ENCODE measurements at regions of chr11 and their contacts with region 1.

Region 1: DNA sequence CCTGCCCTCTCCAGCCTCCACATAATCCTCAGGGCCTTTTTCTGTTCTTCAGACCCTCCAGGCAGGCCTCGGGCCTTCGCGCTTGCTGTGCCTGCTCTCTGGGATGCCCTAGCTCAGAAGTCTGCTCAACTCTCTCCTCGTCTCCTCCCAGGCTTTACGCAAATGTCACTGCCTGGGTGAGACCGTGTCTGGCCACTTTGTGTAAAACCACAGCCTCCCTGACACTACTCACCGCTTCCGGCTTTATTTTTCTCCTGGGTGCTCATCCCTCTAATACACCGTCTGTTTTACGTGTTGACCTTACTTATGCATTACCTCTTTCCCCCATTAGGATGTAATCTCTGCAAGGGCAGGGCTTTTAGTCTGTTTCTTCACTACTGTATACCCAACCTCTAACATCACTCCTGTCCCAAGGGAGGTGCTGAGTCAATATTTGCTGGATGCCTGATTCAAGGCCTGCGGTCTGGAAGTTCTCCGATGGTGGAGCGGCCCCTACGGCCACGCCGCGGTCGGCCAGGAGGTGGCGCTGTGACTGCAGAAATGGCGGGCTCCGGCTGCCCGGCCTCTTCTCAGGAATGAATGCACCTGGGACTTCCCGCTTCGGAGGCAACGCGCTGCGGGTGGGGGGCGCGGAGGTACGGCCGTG is 58.2 kb upstream of the THY1 start:
- DNase-seq: peak; percentile 93
- ATAC-seq: peak; percentile 96
- H3K4me3 ChIP-seq: no peak overlapping the region
- H3K27ac ChIP-seq: no peak overlapping the region
- H3K4me1 ChIP-seq: no peaks in the 10 kb centered on the region
- H3K27me3 ChIP-seq: peaks cover 47% of the 10 kb centered on the region
- CTCF ChIP-seq: peak; percentile 98
- POLR2A ChIP-seq: no peak
- RAD21 ChIP-seq: peak; percentile 94

Region 2: GRCh38 chr11:119470317-119471291 is 10.5 kb before region 1 on chr11:
- CTCF ChIA-PET with region 1: no interaction called
- POLR2A ChIA-PET with region 1: no interaction called
- dilution Hi-C with region 1: no loop called
- in situ Hi-C with region 1: no loop called
- intact Hi-C with region 1: no loop called
- DNase-seq: peak; percentile 96
- ATAC-seq: peak; percentile 85
- H3K4me3 ChIP-seq: no peak overlapping the region
- H3K27ac ChIP-seq: peak overlapping the region; percentile 75
- H3K4me1 ChIP-seq: peaks cover 18% of the 10 kb centered on the region
- H3K27me3 ChIP-seq: no peaks in the 10 kb centered on the region
- CTCF ChIP-seq: no peak
- POLR2A ChIP-seq: no peak
- RAD21 ChIP-seq: peak; percentile 22; the same call in 1 of the 2 replicates

Region 3: GRCh38 chr11:119533921-119534736 is 53.0 kb after region 1 on chr11:
- CTCF ChIA-PET with region 1: no interaction called
- POLR2A ChIA-PET with region 1: no interaction called
- dilution Hi-C with region 1: no loop called
- in situ Hi-C with region 1: no loop called
- intact Hi-C with region 1: loop called (anchors 1 kb)
- DNase-seq: peak; percentile 23
- ATAC-seq: peak; percentile 92
- H3K4me3 ChIP-seq: no peak overlapping the region
- H3K27ac ChIP-seq: no peak overlapping the region
- H3K4me1 ChIP-seq: no peaks in the 10 kb centered on the region
- H3K27me3 ChIP-seq: peaks cover 65% of the 10 kb centered on the region
- CTCF ChIP-seq: peak; percentile 59
- POLR2A ChIP-seq: no peak
- RAD21 ChIP-seq: peak; percentile 54

Region 4: GRCh38 chr11:119666463-119667131 is 185.5 kb after region 1 on chr11:
- CTCF ChIA-PET with region 1: no interaction called
- POLR2A ChIA-PET with region 1: no interaction called
- dilution Hi-C with region 1: no loop called
- in situ Hi-C with region 1: no loop called
- intact Hi-C with region 1: loop called (anchors 1 kb)
- DNase-seq: peak; percentile 47
- ATAC-seq: peak; percentile 95
- H3K4me3 ChIP-seq: no peak overlapping the region
- H3K27ac ChIP-seq: no peak overlapping the region
- H3K4me1 ChIP-seq: peaks cover 4% of the 10 kb centered on the region; the same call in 1 of the 2 replicates
- H3K27me3 ChIP-seq: no peaks in the 10 kb centered on the region
- CTCF ChIP-seq: peak; percentile 94
- POLR2A ChIP-seq: peak; percentile 35; the same call in 1 of the 2 replicates
- RAD21 ChIP-seq: peak; percentile 98

Region 5: DNA sequence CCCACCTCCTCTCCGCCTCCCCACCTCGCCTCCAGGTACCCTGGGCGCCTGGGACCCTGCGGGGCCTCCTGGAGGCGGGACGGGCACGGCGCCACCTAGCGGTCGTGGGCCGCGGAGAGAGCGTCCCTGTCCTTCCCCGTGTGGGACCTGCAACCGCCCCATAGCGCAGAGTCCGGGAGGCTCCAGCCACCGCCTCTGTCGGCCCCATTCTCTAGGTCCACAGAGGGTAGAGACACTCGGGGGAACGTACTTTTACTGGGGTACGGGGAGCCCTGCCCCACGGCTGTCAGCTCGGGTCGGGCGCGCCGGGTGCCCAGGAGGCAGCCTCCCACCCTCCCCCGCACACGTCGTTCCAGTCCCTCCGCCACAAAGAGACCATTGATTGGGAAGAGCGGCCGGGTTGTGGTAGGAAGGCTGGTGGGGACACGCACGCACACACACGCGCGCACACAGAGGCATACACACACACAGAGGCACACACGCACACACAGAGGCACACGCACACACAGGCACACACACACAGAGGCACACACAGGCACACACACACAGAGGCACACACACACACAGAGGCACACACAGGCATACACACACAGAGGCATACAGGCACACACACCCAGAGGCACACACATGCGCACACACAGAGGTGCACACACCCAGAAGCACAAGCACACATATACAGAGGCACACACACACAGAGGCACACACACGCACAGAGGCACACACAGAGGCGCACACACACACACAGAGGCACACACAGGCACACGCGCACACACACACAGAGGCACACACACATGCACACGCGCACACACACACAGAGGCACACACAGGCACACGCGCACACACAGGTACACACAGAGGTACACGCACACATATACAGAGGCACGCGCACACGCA is 260.5 kb after region 1 on chr11:
- CTCF ChIA-PET with region 1: no interaction called
- POLR2A ChIA-PET with region 1: no interaction called
- dilution Hi-C with region 1: no loop called
- in situ Hi-C with region 1: no loop called
- intact Hi-C with region 1: loop called (anchors 1 kb)
- DNase-seq: no peak
- ATAC-seq: peak; percentile 80
- H3K4me3 ChIP-seq: no peak overlapping the region
- H3K27ac ChIP-seq: no peak overlapping the region
- H3K4me1 ChIP-seq: no peaks in the 10 kb centered on the region; the same call in 1 of the 2 replicates
- H3K27me3 ChIP-seq: peaks cover 67% of the 10 kb centered on the region
- CTCF ChIP-seq: peak; percentile 57
- POLR2A ChIP-seq: no peak
- RAD21 ChIP-seq: peak; percentile 33; the same call in 1 of the 2 replicates

Region 6: DNA sequence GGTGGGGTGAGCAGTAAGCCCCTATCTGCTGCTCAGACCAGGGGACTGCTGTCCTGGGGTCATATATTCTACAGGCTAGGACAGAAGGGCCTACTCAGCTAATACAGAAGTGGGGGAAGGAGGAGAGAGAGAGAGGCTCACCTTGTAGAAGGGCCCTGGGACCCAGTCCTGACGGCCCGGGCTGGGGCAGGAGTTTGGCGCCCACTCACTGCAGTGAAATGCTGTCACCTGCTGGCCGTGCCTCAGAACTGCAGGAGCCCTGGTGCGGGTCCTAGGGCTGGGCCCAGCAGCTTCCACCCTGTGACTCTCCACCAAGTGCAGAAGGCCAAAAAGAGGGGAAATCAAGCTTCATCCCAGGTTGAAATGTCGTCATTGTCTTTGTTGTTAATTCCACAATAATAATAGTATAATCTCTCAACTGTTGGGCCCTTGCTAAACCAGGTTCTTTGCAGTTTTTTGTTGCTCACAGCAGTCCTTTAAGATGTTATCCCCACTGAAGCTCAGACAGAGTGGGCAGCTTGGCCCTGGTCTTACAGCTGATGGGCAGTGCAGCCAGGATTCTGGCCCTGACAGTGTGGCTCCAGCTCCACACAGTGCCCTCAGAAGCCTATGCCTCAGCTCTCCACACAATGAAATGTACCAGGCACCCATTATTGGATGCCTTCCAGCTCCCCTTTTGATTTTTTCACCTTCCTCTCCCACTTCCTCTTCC is 627.2 kb after region 1 on chr11:
- CTCF ChIA-PET with region 1: interaction called, 3 read pairs
- POLR2A ChIA-PET with region 1: no interaction called
- dilution Hi-C with region 1: no loop called
- in situ Hi-C with region 1: loop called (anchors 5 kb)
- intact Hi-C with region 1: loop called (anchors 1 kb)
- DNase-seq: peak; percentile 30
- ATAC-seq: peak; percentile 99
- H3K4me3 ChIP-seq: no peak overlapping the region
- H3K27ac ChIP-seq: no peak overlapping the region
- H3K4me1 ChIP-seq: no peaks in the 10 kb centered on the region
- H3K27me3 ChIP-seq: peaks cover 68% of the 10 kb centered on the region
- CTCF ChIP-seq: peak; percentile 98
- POLR2A ChIP-seq: no peak
- RAD21 ChIP-seq: peak; percentile 95

Region 7: GRCh38 chr11:120303004-120303637 is 822.0 kb after region 1 on chr11:
- CTCF ChIA-PET with region 1: no interaction called
- POLR2A ChIA-PET with region 1: no interaction called
- dilution Hi-C with region 1: no loop called
- in situ Hi-C with region 1: no loop called
- intact Hi-C with region 1: loop called (anchors 1 kb)
- DNase-seq: peak; percentile 80
- ATAC-seq: peak; percentile 74
- H3K4me3 ChIP-seq: no peak overlapping the region
- H3K27ac ChIP-seq: no peak overlapping the region
- H3K4me1 ChIP-seq: peaks cover 6% of the 10 kb centered on the region; the same call in 1 of the 2 replicates
- H3K27me3 ChIP-seq: peaks cover 16% of the 10 kb centered on the region
- CTCF ChIP-seq: peak; percentile 99
- POLR2A ChIP-seq: no peak
- RAD21 ChIP-seq: peak; percentile 75

Measured in IMR-90 (cell line).